Naive thymus-derived CD8-positive, alpha-beta T cell (primary cell): ENCODE measurements at regions of chr9 and their contacts with region 1.

Region 1: DNA sequence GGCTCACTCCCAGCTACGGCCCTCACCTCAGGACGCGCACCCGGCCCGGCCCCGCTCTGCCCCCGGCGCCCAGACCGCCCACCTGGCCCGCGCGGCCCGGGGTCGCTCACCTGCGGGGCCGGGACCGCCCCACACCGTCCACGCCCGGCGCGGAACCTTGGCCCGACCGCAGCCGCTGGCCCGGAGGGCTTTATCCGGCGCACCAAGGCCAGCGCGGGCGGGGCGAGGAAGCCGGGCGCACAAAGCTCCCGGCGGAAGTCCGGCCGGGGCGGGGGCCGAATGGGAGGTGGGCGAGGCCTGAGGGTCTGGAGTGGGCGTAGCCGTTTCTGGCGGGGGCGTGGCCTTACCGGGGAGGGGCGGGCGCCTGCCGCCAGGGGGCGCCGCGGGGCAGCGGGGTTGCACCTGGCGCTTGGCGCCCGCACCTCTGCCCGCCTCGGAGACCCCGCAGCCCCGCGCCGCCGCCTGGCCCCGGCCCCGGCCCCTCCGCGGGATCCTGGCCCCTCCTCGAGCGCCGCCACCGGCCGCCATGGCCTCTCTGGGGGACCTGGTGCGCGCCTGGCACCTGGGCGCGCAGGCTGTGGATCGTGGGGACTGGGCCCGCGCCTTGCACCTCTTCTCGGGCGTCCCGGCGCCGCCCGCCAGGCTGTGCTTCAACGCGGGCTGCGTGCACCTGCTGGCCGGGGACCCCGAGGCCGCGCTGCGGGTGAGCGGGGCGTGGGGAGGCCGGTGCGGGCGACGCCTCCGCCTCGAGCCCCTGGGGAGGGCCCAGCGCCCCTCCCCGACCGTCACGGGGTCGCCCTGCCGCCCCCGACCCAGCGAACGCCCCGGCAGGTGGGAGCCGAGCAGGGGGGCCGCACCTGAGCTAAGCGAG is at the starts of genes EXD3 and NOXA1:
- DNase-seq: peak; percentile 85 to 98 (median 93)
- ATAC-seq: peak; percentile 83 to 89
- H3K4me3 Mint-ChIP-seq: peak within 1 kb of the TSS; percentile 70 to 91 (median 82)
- H3K27ac Mint-ChIP-seq: peak within 1 kb of the TSS; percentile 48 to 87 (median 76)
- H3K4me1 Mint-ChIP-seq: peaks cover 0 to 20% (median 11%) of the 10 kb centered on the region in 4 donors
- H3K27me3 Mint-ChIP-seq: no peaks in the 10 kb centered on the region
- polyA plus RNA-seq, gene EXD3: 2.6 to 4.3 (median 3.9) TPM
- polyA plus RNA-seq, gene NOXA1: 0.75 to 1.1 (median 1.1) TPM

Region 2: GRCh38 chr9:137387114-137387890 is 35.9 kb before region 1 on chr9:
- POLR2A ChIA-PET with region 1: interaction called, 12 read pairs
- DNase-seq: peak in 5 of 10 donors; percentile 12 to 59 (median 46)
- ATAC-seq: peak; percentile 88 to 89
- H3K4me3 Mint-ChIP-seq: peak overlapping the region in 7 of 10 donors; percentile 48 to 76 (median 60)
- H3K27ac Mint-ChIP-seq: peak overlapping the region in 6 of 10 donors; percentile 86 to 97 (median 94)
- H3K4me1 Mint-ChIP-seq: peaks cover 5 to 17% (median 13%) of the 10 kb centered on the region in 4 donors
- H3K27me3 Mint-ChIP-seq: no peaks in the 10 kb centered on the region

Region 3: GRCh38 chr9:137435980-137436760 is 12.9 kb after region 1 on chr9:
- POLR2A ChIA-PET with region 1: no interaction called
- DNase-seq: peak in 1 of 10 donors; percentile 34
- ATAC-seq: no peak
- H3K4me3 Mint-ChIP-seq: no peak overlapping the region
- H3K27ac Mint-ChIP-seq: no peak overlapping the region
- H3K4me1 Mint-ChIP-seq: no peaks in the 10 kb centered on the region
- H3K27me3 Mint-ChIP-seq: peaks cover 0 to 6% (median 0%) of the 10 kb centered on the region in 5 donors

Region 4: GRCh38 chr9:137459147-137459600 is 35.9 kb after region 1 on chr9 and contains the start of gene NSMF:
- POLR2A ChIA-PET with region 1: interaction called, 26 read pairs
- DNase-seq: peak; percentile 86 to 97 (median 95)
- ATAC-seq: peak; percentile 49 to 52
- H3K4me3 Mint-ChIP-seq: peak within 1 kb of the TSS; percentile 60 to 80 (median 70)
- H3K27ac Mint-ChIP-seq: peak within 1 kb of the TSS; percentile 48 to 98 (median 90)
- H3K4me1 Mint-ChIP-seq: peaks cover 4 to 49% (median 43%) of the 10 kb centered on the region in 4 donors
- H3K27me3 Mint-ChIP-seq: no peaks in the 10 kb centered on the region
- polyA plus RNA-seq, gene NSMF: 7.7 to 14.7 (median 8.2) TPM